Dorsolateral prefrontal cortex (tissue), 120 donors: ENCODE measurements at regions of chr1 and their contacts with region 1.

Region 1: DNA sequence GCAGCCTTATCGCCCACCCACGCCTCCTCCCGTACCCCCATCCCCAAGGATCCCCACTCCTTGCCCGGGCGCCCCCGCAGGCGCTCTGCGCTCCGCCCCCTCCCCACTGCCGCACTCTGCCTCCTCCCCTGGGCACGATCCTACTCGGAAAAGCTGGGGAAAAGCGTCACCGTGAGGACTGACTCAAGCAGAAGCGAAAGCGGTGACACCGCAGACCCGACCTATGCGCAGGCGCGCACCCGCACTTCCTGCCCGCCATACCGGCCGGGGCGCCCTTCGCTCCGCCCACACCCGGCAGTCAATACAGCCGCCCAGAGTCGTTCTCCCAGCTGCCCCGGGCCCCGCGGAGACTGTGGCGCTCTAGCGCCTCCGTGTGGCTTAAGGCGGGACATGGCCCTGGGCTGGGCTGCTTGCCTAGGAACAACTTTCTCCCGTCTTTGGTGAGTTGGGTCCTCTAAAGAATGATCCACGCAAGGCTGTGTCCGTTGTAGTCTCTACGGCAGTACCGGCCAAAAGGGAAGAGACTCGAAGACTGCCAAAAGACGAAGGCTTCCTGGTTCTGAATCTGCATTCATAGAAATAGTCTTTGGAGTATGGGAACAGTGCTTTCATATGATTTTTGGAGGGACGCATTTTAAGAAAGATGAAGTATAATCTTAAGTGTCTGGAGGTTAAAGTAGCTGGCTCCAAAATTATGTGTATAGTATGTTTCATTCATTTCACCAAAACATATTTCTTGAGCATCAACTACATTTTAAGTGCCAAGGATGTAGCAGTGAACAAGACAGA is at the start of gene OMA1:
- DNase-seq: peak; percentile 90 to 96 (median 93)
- H3K4me3 ChIP-seq: peak within 1 kb of the TSS; percentile 57 to 95 (median 82)
- H3K27ac ChIP-seq: peak within 1 kb of the TSS; percentile 87 to 100 (median 98)
- H3K27me3 ChIP-seq: no peaks in the 10 kb centered on the region
- CTCF ChIP-seq: peak; percentile 88 to 99 (median 97)
- total RNA-seq, gene OMA1: 12.0 to 51.9 (median 29.6) TPM

Region 2: DNA sequence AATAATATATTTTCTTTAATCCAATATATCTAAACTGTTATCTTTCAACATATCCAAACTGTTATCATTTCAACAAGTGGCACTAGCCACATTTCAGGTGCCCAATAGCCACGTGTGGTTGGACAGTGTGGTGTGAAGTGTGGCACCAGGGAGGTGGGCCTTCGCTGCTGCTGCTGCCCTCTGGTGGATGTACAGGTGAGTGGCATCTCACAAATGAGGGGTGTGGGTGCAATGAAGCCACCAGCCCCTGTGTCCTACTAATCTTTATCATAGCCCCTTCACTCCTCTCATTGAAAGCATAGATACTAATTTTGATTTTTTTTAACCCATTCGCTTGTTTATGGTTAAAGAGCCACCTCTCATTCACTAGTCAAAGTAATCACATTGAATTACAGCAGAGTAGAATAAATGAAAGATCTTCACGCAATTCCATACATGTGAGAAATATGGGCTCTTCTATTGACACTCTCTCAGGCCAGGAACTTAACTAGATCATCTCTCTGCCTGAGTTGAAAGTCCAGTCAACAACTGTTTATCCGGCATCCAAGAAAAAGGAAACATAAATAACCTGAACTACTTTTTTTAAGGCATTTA is 499.4 kb before region 1 on chr1:
- intact Hi-C with region 1: no loop called
- DNase-seq: peak in 1 of 10 donors; percentile 22
- H3K4me3 ChIP-seq: no peak overlapping the region
- H3K27ac ChIP-seq: no peak overlapping the region
- H3K27me3 ChIP-seq: no peaks in the 10 kb centered on the region
- CTCF ChIP-seq: peak; percentile 36 to 81 (median 71)

Region 3: DNA sequence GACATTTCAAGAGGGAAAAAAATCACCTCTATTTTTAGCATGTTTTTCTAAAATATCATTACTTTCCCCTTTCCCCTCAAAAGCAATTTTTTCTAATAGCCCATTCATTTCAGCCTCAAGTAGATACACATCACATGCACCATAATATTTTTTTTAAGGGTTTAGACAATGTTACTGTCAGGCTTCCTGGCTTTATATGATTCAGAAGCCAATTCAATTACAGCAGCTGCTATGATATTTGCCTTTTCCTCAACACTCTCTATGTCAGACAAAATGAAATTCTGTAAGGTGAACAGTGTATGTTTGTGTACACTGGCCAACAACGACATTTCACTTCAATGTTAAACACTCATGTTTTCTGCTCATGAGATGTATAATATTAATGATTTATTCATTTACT is 46.7 kb before region 1 on chr1:
- intact Hi-C with region 1: no loop called
- DNase-seq: no peak
- H3K4me3 ChIP-seq: no peak overlapping the region
- H3K27ac ChIP-seq: no peak overlapping the region
- H3K27me3 ChIP-seq: no peaks in the 10 kb centered on the region
- CTCF ChIP-seq: no peak

Region 4: GRCh38 chr1:58581641-58582040 is 34.9 kb after region 1 on chr1:
- intact Hi-C with region 1: loop called in 1 of 2 experiments (anchors 1 kb)
- DNase-seq: no peak
- H3K4me3 ChIP-seq: no peak overlapping the region
- H3K27ac ChIP-seq: peak overlapping the region in 3 of 59 donors; percentile 19 to 90 (median 74)
- H3K27me3 ChIP-seq: peaks cover 0 to 16% (median 8%) of the 10 kb centered on the region in 45 donors
- CTCF ChIP-seq: no peak

Region 5: DNA sequence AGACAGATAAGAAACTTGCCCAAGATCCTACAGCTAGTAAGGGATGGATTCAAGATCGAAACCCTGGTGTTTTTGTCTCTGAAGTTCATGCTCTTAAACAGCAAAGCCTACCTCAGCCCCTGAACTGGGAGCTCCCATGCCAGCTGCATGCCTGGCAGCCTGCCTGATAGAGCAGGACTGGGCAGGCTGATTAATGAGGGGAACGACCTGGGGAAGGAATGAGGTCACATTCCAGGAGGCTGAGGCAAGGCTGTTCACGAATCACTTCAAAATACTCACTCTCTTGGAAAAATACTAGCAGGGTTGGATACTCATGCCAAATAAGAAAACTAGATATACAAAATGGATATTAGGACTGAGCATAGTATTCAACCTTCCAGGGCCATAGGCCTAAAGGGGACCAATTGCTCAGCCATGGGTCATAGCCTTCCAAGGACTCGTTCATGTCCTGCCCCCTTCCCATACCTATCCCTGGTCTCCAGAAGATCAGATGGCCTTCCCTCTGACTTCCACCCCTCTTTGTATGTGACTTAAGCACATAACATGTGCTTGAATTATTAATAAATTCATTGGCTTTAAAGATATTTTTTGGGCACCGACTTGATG is 45.9 kb after region 1 on chr1:
- intact Hi-C with region 1: no loop called
- DNase-seq: no peak
- H3K4me3 ChIP-seq: no peak overlapping the region
- H3K27ac ChIP-seq: no peak overlapping the region
- H3K27me3 ChIP-seq: no peaks in the 10 kb centered on the region
- CTCF ChIP-seq: no peak

Region 6: DNA sequence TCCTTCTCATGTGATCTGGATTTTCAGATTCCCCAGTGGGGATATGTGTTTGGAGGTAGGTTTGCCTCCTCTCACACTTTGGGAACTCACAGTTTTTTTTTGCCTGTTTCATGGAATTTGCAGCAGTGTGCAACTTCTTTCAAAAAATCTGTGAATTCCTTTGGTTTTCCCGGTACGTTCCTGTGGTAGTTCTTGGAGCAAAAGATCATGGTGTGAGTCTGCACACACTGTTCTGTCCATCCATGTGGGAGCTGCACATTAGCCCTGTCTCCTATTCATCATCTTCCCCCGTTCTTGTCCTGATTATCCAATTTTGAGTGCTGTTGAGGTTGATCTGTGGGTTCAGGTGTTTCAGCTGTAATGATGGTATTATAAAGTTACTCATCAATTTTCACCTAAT is 60.7 kb after region 1 on chr1:
- intact Hi-C with region 1: no loop called
- DNase-seq: no peak
- H3K4me3 ChIP-seq: no peak overlapping the region
- H3K27ac ChIP-seq: no peak overlapping the region
- H3K27me3 ChIP-seq: peaks cover 0 to 6% (median 0%) of the 10 kb centered on the region in 45 donors
- CTCF ChIP-seq: no peak

Region 7: DNA sequence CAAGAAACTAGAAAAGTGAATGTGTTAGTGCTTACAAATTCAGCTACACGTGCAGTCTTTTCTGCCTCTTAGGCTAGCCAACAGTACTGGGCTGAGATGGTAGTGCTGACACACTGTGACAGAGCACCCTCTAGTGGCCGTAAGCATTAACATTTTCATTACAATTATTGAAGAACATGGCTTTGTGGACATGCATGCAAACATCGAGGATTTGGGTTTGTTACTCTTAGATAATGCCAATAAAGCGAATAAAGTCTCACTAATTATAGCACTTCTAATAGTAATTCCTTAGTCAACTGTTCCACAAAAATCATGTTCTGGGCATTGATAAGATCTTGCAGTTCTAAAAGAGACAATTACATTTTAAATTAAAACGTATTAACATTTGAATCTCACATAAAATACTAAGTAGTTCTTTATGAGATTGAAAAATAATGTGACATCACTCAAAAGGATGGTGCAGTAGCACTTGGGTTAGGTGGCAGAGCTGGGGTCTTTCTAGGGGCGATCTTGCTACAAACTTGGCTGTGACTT is 106.0 kb after region 1 on chr1:
- intact Hi-C with region 1: loop called (anchors 2 to 10 kb)
- DNase-seq: peak in 9 of 10 donors; percentile 41 to 82 (median 53)
- H3K4me3 ChIP-seq: no peak overlapping the region
- H3K27ac ChIP-seq: peak overlapping the region in 8 of 59 donors; percentile 9 to 37 (median 22)
- H3K27me3 ChIP-seq: no peaks in the 10 kb centered on the region
- CTCF ChIP-seq: peak; percentile 76 to 98 (median 92)

Region 8: DNA sequence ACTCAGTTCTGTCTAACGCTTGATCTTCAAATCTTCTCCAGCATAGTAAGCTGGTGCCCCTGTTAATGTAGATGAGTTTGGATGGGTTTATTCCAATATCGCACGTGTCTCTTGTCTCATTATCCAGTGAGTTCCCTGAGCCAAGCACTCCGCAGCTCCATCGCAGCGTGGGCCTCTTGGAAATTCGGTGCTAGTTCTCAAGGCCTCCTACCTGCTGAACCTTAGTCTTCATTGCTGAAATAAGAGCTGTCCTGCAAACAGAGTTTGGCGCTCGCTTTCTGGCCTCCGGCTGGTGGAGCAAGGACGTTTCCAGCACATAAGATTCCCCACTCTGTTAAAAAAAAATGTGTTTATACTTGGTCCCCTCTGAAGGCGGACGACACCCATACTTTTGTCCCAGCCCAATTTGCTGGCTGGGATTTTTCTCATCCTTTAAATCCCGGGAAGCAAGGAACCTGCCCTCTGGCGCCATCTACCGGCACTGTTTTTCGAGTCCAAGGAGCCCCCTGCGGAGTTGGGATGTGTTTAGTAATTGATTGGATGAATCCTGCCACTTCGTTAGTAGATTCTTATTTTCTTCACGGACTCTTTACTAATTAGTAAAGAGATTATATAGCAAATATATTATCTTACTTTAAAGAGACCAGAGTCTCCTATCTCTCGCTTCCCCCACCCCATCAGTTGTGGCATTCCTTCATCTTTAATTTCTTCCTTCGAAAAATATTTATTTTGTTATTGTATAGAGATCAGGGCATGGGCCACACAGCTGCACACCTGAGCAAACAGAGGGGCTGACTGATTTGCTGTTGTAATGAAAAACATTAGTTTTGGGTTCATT is 222.5 kb after region 1 on chr1:
- intact Hi-C with region 1: loop called in 1 of 2 experiments (anchors 10 kb)
- DNase-seq: peak; percentile 54 to 86 (median 78)
- H3K4me3 ChIP-seq: no peak overlapping the region
- H3K27ac ChIP-seq: no peak overlapping the region
- H3K27me3 ChIP-seq: no peaks in the 10 kb centered on the region
- CTCF ChIP-seq: peak; percentile 48 to 91 (median 85)

Region 9: GRCh38 chr1:59759156-59759925 is 1212.6 kb after region 1 on chr1:
- intact Hi-C with region 1: loop called in 1 of 2 experiments (anchors 10 kb)
- DNase-seq: peak; percentile 62 to 88 (median 82)
- H3K4me3 ChIP-seq: peak overlapping the region in 45 of 59 donors; percentile 3 to 59 (median 35)
- H3K27ac ChIP-seq: peak overlapping the region in 9 of 59 donors; percentile 8 to 59 (median 30)
- H3K27me3 ChIP-seq: no peaks in the 10 kb centered on the region
- CTCF ChIP-seq: peak; percentile 68 to 100 (median 96)